Activated CD4-positive, alpha-beta memory T cell treated with anti-CD3 and anti-CD28 coated beads, Interleukin-2, amount 10 ng/mL, durations not matched to agents 7 days and 5 days (primary cell): ENCODE measurements at regions of chr10 and their contacts with region 1.

Region 1: GRCh38 chr10:71383972-71384687 is 12.6 kb upstream of the CDH23 start:
- DNase-seq: peak; percentile 75
- H3K4me3 Mint-ChIP-seq: no peak overlapping the region
- H3K27ac Mint-ChIP-seq: no peak overlapping the region
- H3K4me1 Mint-ChIP-seq: no peaks in the 10 kb centered on the region
- H3K27me3 Mint-ChIP-seq: peaks cover 11% of the 10 kb centered on the region

Region 2: GRCh38 chr10:71812016-71812912 is 428.1 kb after region 1 on chr10:
- CTCF ChIA-PET with region 1: interaction called, 14 read pairs
- POLR2A ChIA-PET with region 1: no interaction called
- DNase-seq: peak; percentile 81
- H3K4me3 Mint-ChIP-seq: no peak overlapping the region
- H3K27ac Mint-ChIP-seq: no peak overlapping the region
- H3K4me1 Mint-ChIP-seq: no peaks in the 10 kb centered on the region
- H3K27me3 Mint-ChIP-seq: peaks cover 1% of the 10 kb centered on the region